ENCODE measurements at regions of chr11 and their contacts with region 1.

Region 1: DNA sequence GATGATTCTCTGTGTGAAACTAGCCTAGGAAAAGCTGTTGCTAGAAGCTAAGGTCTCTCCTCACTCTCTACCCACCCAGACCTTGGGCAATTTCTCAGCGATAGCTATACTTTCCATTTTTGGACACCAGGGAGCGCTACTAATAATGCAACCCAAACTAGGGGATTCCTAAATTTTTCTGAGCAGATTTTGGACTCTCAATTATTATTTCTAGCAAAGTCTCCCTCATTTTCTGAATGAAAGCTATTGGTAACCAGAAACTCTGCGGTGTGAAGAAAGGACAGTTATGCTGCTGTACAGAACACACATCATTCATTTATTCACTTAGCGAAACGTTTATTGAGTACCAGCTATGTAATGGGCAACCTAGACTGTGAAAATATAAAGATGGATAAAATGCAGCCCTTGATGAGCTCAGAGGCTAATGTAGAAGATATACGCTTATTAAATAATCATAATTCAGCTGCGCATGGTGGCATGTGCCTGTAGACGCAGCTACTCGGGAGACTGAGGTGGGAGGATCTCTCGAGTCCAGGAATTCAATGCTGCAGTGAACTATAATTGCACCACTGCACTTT is 6.1 kb upstream of the STIM1 start:
- DNase-seq: peak; percentile 39
- CTCF ChIP-seq: peak; percentile 53

Region 2: DNA sequence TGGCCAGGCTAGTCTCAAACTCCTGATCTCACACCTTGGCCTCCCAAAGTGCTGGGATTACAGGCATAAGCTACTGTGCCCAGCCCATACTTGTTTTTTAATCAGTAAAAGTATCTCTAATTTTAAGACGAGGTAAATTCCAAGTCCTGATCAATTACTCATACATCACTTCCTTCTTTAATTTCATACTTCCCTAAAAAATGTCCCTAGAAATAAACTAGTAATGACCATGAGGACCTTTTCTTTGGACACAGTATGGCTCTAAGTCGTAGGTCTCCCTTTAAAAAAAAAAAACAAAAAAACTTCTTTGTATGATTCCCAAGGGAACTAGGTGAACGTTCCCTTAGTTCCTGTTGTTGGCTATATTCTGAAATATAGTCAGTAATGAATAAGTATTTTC is 81.8 kb before region 1 on chr11:
- CTCF ChIA-PET with region 1: no interaction called
- POLR2A ChIA-PET with region 1: no interaction called
- DNase-seq: no peak
- CTCF ChIP-seq: no peak

Region 3: GRCh38 chr11:3807909-3808860 is 41.2 kb before region 1 on chr11 and contains the start of gene PGAP2:
- CTCF ChIA-PET with region 1: interaction called, 17 read pairs
- POLR2A ChIA-PET with region 1: no interaction called
- DNase-seq: peak; percentile 80
- CTCF ChIP-seq: peak; percentile 72

Region 4: DNA sequence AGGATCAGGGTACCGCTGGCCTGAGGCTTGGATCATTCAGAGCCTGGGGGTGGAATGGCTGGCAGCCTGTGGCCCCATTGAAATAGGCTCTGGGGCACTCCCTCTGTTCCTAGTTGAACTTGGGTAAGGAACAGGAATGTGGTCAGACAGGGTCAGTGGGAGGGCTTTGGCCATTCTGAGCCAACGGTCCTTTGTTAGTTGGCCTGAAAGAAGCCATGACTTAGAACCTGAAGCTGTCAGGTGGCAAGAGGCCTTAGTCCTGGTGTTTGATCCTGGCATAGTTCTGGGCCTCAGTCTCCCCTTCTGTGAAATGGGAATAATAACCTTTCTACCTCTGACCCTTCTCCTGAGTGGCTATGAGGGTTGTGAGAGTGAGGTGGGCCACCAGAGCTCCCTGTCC is 32.7 kb before region 1 on chr11:
- CTCF ChIA-PET with region 1: interaction called, 20 read pairs
- POLR2A ChIA-PET with region 1: interaction called, 3 read pairs
- DNase-seq: no peak
- CTCF ChIP-seq: no peak

Region 5: DNA sequence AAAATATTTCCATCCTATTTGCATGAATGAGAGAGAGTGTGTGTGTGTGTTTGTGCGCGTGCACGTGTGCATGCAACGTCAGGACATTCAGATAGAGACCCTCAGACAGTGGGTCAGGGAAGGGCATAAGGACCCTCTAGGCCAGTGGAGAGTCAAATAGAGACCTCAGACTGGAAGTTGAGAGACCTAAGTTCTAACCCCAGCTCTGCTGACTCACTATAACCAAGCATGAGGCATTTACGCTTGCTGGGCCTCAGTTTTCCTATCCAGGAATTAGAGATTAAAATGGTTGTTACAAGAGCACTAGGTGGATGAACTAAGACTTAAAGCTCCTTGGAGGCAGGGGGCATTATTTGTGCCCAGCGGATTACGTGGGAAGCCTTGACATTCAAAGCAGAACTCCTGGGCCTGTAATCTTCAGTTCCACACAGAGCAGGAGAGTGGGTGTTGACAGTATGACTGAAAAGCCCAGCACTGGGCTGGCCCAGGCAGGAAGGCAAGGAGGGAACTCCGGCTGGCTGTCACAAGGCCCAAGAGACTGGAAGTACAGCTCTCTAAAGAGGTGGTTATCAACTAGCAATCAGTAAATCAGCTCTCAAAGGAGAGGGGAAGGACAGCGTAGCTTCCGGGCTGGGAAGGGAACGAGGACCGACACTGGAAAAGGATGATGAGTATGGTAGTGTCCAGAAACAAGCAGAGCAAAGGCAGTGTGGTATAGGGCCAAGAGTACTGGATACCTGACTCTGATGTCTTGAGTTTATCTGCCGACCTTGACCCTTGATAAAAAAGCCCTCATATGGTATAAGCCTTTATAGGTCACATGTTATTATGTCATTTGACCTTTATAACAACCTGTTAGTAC is 17.8 kb before region 1 on chr11:
- CTCF ChIA-PET with region 1: interaction called, 329 read pairs
- POLR2A ChIA-PET with region 1: no interaction called
- DNase-seq: no peak
- CTCF ChIP-seq: no peak

Region 6: DNA sequence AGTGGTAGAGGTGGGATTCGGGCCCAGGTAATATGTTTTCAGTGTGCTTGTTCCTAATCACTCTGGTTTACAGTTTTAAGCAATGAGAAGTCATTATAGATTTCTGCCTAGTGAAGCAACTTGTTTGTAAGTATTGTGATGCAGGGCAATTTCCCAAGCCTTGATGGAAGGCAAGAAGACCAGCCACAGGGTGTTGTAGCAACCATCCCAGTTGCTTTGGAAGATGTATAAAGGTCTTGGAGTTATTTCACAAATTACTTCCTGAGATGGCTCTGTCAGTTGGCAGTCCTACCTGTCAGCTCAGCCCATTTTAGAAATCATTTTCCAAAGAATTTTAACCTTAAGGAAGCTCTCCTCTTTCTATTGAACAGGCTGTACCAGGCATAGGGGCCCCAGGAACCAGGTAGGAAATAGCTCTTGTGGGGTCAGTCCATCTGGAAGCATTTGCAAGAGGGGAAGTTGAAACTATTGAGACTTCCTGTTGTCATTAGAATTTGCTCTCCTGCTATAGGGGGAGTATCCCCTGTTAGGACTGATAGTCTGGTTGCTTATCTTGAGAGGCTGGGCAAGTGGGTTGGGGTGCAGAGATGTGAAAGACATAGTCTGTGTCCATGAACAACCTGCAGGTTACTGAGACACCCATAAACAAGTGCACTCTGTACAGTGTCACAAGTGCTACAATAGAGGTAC is 54.0 kb after region 1 on chr11:
- CTCF ChIA-PET with region 1: interaction called, 22 read pairs
- POLR2A ChIA-PET with region 1: no interaction called
- DNase-seq: no peak
- CTCF ChIP-seq: no peak

Region 7: GRCh38 chr11:3942160-3942955 is 93.0 kb after region 1 on chr11:
- CTCF ChIA-PET with region 1: interaction called, 13 read pairs
- POLR2A ChIA-PET with region 1: no interaction called
- DNase-seq: no peak
- CTCF ChIP-seq: no peak

Region 8: GRCh38 chr11:4044976-4045646 is 195.7 kb after region 1 on chr11:
- CTCF ChIA-PET with region 1: interaction called, 14 read pairs
- POLR2A ChIA-PET with region 1: no interaction called
- DNase-seq: no peak
- CTCF ChIP-seq: no peak